Naive thymus-derived CD4-positive, alpha-beta T cell (primary cell): ENCODE measurements at regions of chr2 and their contacts with region 1.

Region 1: DNA sequence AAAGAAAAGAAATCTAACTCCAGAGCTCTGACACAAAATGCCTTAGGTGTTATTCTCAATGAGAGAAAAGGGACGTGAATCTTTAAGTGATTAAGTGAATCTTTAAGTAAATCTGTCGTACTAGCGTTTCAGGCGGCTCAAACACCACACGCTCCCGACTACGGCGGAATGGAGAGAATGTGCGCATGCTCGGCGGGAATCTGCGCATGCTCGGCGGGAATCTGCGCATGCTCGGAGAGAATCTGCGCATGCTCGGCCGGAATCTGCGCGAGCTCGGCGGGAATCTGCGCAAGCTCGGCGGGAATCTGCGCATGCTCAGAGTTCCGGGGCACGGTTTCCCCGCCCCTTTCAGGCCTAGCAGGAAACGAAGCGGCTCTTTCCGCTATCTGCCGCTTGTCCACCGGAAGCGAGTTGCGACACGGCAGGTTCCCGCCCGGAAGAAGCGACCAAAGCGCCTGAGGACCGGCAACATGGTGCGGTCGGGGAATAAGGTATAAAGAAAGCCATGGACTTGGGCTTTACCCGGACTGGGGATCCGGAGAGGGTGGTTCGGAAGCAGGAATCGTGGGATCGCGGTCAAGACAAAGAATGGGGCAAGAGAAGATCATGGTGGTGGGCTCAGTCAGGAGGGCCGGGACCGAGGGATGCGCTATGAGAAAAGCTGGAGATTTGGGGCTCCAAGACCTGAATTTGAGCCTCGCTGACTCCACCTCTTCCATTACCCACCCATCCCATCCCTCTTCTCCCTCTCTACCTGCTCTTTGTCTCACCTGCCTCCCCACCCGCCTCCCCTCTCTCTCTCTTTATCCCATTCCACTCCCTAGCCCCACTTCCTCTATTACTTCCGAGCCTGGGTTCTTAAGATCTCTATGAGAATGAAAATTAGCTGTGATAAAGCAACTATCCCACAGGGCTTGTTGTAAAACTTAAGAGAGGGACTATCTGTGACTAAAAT is at the start of gene XRCC5:
- DNase-seq: peak; percentile 95 to 97 (median 97)
- ATAC-seq: peak; percentile 93
- H3K4me3 ChIP-seq: peak within 1 kb of the TSS; percentile 96
- H3K4me3 Mint-ChIP-seq: peak within 1 kb of the TSS; percentile 96 to 100 (median 100)
- H3K27ac ChIP-seq: peak within 1 kb of the TSS; percentile 95
- H3K27ac Mint-ChIP-seq: peak within 1 kb of the TSS; percentile 97 to 100 (median 100)
- H3K4me1 ChIP-seq: peaks cover 24 to 30% of the 10 kb centered on the region in 2 donors
- H3K4me1 Mint-ChIP-seq: peaks cover 20 to 57% (median 52%) of the 10 kb centered on the region in 7 donors
- H3K27me3 ChIP-seq: no peaks in the 10 kb centered on the region
- H3K27me3 Mint-ChIP-seq: peaks cover 0 to 4% (median 0%) of the 10 kb centered on the region in 5 donors
- total RNA-seq, gene XRCC5: 168 to 347 (median 228) TPM

Region 2: GRCh38 chr2:215311625-215312396 is 797.4 kb before region 1 on chr2 and contains the start of gene ATIC:
- CTCF ChIA-PET with region 1: no interaction called
- POLR2A ChIA-PET with region 1: no interaction called
- intact Hi-C with region 1: loop called (anchors 1 to 5 kb)
- DNase-seq: peak; percentile 67 to 92 (median 83)
- ATAC-seq: peak; percentile 98
- H3K4me3 ChIP-seq: peak within 1 kb of the TSS; percentile 98
- H3K4me3 Mint-ChIP-seq: peak within 1 kb of the TSS; percentile 86 to 95 (median 93)
- H3K27ac ChIP-seq: peak within 1 kb of the TSS; percentile 74
- H3K27ac Mint-ChIP-seq: peak within 1 kb of the TSS; percentile 84 to 97 (median 92)
- H3K4me1 ChIP-seq: peaks cover 13 to 16% of the 10 kb centered on the region in 2 donors
- H3K4me1 Mint-ChIP-seq: peaks cover 11 to 42% (median 37%) of the 10 kb centered on the region in 7 donors
- H3K27me3 ChIP-seq: no peaks in the 10 kb centered on the region
- H3K27me3 Mint-ChIP-seq: peaks cover 0 to 2% (median 0%) of the 10 kb centered on the region in 5 donors
- total RNA-seq, gene ATIC: 62.1 to 170 (median 83.2) TPM

Region 3: DNA sequence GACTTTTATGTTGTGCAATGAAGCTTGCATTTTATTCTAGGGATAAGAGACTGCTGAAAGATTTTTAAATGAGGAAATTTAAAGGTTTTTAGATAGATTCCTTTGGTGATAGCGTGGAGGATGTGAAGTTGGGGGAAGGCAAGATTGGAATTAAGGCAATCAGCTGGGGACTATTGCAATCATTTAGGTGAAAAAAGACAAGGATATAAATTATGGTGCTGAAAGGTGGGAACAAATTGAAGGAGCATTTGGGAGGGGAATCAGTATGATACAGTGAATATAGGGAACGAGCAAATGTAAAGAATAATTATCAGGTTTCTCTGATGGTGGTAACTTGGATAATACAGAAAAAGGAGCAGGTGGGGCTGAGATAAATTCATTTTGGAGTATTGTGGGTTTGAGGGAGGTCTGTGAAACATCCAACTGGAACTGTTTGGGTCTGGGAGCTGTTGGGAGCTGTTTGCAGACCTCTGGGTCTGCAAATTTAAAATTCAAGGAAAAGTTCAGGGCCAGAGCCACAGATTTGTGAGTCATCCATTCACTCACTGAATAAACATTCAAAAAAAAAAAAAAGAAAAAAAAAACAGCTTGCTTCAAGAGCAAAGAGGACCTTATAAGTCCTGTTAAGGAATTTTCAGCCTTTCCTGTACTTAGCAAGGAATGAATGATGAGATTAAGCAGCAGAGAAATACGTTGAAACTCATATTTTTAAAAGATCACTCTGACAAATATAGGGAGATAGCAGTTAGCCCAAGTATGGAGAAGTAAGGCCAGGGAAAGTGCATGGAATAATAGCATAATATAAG is 415.8 kb before region 1 on chr2:
- CTCF ChIA-PET with region 1: no interaction called
- POLR2A ChIA-PET with region 1: no interaction called
- intact Hi-C with region 1: no loop called
- DNase-seq: no peak
- ATAC-seq: no peak
- H3K4me3 ChIP-seq: no peak overlapping the region
- H3K4me3 Mint-ChIP-seq: no peak overlapping the region
- H3K27ac ChIP-seq: no peak overlapping the region
- H3K27ac Mint-ChIP-seq: no peak overlapping the region
- H3K4me1 ChIP-seq: no peaks in the 10 kb centered on the region
- H3K4me1 Mint-ChIP-seq: peaks cover 0 to 3% (median 0%) of the 10 kb centered on the region in 7 donors
- H3K27me3 ChIP-seq: no peaks in the 10 kb centered on the region
- H3K27me3 Mint-ChIP-seq: peaks cover 0 to 8% (median 0%) of the 10 kb centered on the region in 5 donors

Region 4: DNA sequence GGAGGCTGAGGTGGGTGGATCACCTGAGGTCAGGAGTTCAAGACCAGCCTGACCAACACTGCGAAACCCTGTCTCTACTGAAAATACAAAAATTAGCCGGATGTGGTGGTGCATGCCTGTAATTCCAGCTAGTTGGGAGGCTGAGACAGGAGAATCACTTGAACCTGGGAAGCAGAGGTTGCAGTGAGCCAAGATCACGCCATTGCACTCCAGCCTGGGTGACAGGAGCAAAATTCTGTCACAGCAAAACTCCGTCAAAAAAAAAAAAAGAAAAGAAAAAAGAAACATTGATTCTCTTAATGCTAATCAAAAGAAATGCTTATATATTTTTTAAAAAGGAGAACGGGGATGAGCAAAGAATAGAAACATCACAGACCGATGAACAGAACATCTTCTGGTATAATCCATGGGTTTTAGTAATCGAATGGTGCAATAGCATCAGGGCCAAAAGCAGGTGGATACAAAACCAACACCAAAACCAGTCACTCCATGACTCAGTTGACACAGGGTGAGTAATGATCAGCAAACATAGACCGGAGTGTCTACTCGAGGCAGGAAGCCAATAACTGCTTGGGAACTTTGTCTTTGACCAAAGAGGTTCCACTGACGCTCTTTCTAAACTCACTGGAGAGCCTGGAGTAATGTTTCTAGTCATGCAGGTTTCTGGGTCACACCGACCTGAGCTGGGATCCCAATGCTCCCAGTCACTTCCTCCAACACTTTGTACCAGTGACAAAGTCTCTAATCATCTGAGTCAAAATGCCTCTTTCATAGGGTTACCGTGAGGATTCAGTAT is 127.0 kb before region 1 on chr2:
- CTCF ChIA-PET with region 1: no interaction called
- POLR2A ChIA-PET with region 1: no interaction called
- intact Hi-C with region 1: no loop called
- DNase-seq: no peak
- ATAC-seq: no peak
- H3K4me3 ChIP-seq: no peak overlapping the region
- H3K4me3 Mint-ChIP-seq: no peak overlapping the region
- H3K27ac ChIP-seq: no peak overlapping the region
- H3K27ac Mint-ChIP-seq: peak overlapping the region in 1 of 9 donors; percentile 61
- H3K4me1 ChIP-seq: peaks cover 0 to 8% of the 10 kb centered on the region in 2 donors
- H3K4me1 Mint-ChIP-seq: peaks cover 0 to 36% (median 6%) of the 10 kb centered on the region in 7 donors
- H3K27me3 ChIP-seq: no peaks in the 10 kb centered on the region
- H3K27me3 Mint-ChIP-seq: no peaks in the 10 kb centered on the region

Region 5: GRCh38 chr2:216057688-216058193 is 51.5 kb before region 1 on chr2:
- CTCF ChIA-PET with region 1: interaction called, 4 read pairs
- POLR2A ChIA-PET with region 1: interaction called, 34 read pairs
- intact Hi-C with region 1: loop called (anchors 1 kb)
- DNase-seq: peak in 8 of 9 donors; percentile 48 to 76 (median 67)
- ATAC-seq: peak; percentile 96
- H3K4me3 ChIP-seq: peak overlapping the region; percentile 49
- H3K4me3 Mint-ChIP-seq: peak overlapping the region; percentile 63 to 87 (median 84)
- H3K27ac ChIP-seq: peak overlapping the region; percentile 83
- H3K27ac Mint-ChIP-seq: peak overlapping the region; percentile 94 to 100 (median 98)
- H3K4me1 ChIP-seq: peaks cover 16 to 22% of the 10 kb centered on the region in 2 donors
- H3K4me1 Mint-ChIP-seq: peaks cover 8 to 42% (median 37%) of the 10 kb centered on the region in 7 donors
- H3K27me3 ChIP-seq: no peaks in the 10 kb centered on the region
- H3K27me3 Mint-ChIP-seq: no peaks in the 10 kb centered on the region

Region 6: DNA sequence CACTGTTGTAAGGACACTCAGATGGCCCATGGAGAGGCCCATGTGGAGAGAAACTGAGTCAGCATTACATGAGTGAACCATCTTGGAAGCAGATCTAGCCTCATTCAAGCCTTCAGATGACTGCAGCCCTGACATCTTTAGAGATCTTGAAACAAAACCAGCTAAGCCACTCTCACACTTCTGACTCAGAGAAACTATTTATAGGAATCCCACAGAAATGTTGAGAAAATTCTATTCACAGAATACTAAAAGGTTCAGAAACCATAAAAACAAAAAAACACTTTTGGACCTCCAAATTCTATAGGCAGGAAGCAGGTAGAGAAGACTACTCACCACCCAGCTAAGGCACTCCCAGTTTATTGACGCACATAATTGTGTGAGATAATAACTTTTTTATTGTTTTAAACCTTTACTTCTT is 18.9 kb before region 1 on chr2:
- CTCF ChIA-PET with region 1: interaction called, 6 read pairs
- POLR2A ChIA-PET with region 1: interaction called, 166 read pairs
- intact Hi-C with region 1: no loop called
- DNase-seq: no peak
- ATAC-seq: no peak
- H3K4me3 ChIP-seq: no peak overlapping the region
- H3K4me3 Mint-ChIP-seq: no peak overlapping the region
- H3K27ac ChIP-seq: no peak overlapping the region
- H3K27ac Mint-ChIP-seq: peak overlapping the region in 3 of 9 donors; percentile 4 to 69 (median 6)
- H3K4me1 ChIP-seq: peaks cover 3 to 15% of the 10 kb centered on the region in 2 donors
- H3K4me1 Mint-ChIP-seq: peaks cover 18 to 45% (median 38%) of the 10 kb centered on the region in 7 donors
- H3K27me3 ChIP-seq: no peaks in the 10 kb centered on the region
- H3K27me3 Mint-ChIP-seq: no peaks in the 10 kb centered on the region

Region 7: GRCh38 chr2:216139884-216140283 is 30.6 kb after region 1 on chr2:
- CTCF ChIA-PET with region 1: interaction called, 4 read pairs
- POLR2A ChIA-PET with region 1: no interaction called
- intact Hi-C with region 1: loop called in 1 of 2 experiments (anchors 1 kb)
- DNase-seq: peak in 7 of 9 donors; percentile 26 to 64 (median 52)
- ATAC-seq: peak; percentile 81
- H3K4me3 ChIP-seq: no peak overlapping the region
- H3K4me3 Mint-ChIP-seq: no peak overlapping the region
- H3K27ac ChIP-seq: no peak overlapping the region
- H3K27ac Mint-ChIP-seq: peak overlapping the region in 3 of 9 donors; percentile 22 to 48 (median 31)
- H3K4me1 ChIP-seq: no peaks in the 10 kb centered on the region
- H3K4me1 Mint-ChIP-seq: peaks cover 7 to 44% (median 37%) of the 10 kb centered on the region in 7 donors
- H3K27me3 ChIP-seq: no peaks in the 10 kb centered on the region
- H3K27me3 Mint-ChIP-seq: no peaks in the 10 kb centered on the region

Region 8: GRCh38 chr2:216498418-216499413 is 389.5 kb after region 1 on chr2 and contains the start of gene RPL37A:
- CTCF ChIA-PET with region 1: no interaction called
- POLR2A ChIA-PET with region 1: no interaction called
- intact Hi-C with region 1: loop called (anchors 1 kb)
- DNase-seq: peak; percentile 81 to 91 (median 87)
- ATAC-seq: peak; percentile 98
- H3K4me3 ChIP-seq: peak within 1 kb of the TSS; percentile 95
- H3K4me3 Mint-ChIP-seq: peak within 1 kb of the TSS; percentile 94 to 100 (median 98)
- H3K27ac ChIP-seq: peak within 1 kb of the TSS; percentile 89
- H3K27ac Mint-ChIP-seq: peak within 1 kb of the TSS; percentile 92 to 98 (median 93)
- H3K4me1 ChIP-seq: peaks cover 19 to 24% of the 10 kb centered on the region in 2 donors
- H3K4me1 Mint-ChIP-seq: peaks cover 22 to 61% (median 50%) of the 10 kb centered on the region in 7 donors
- H3K27me3 ChIP-seq: no peaks in the 10 kb centered on the region
- H3K27me3 Mint-ChIP-seq: peaks cover 0 to 3% (median 0%) of the 10 kb centered on the region in 5 donors
- total RNA-seq, gene RPL37A: 2,173 to 3,712 (median 3,236) TPM